ENCODE measurements at regions of chrX and their contacts with region 1.

Region 1: GRCh38 chrX:155216179-155216939 is at the start of gene VBP1:
- DNase-seq: peak; percentile 83
- H3K4me3 Mint-ChIP-seq: peak within 1 kb of the TSS; percentile 98
- H3K27ac Mint-ChIP-seq: peak within 1 kb of the TSS; percentile 92
- H3K4me1 Mint-ChIP-seq: peaks cover 19% of the 10 kb centered on the region
- H3K27me3 Mint-ChIP-seq: no peaks in the 10 kb centered on the region
- total RNA-seq, gene VBP1: 73.7 and 76.3 TPM in 2 replicates

Region 2: DNA sequence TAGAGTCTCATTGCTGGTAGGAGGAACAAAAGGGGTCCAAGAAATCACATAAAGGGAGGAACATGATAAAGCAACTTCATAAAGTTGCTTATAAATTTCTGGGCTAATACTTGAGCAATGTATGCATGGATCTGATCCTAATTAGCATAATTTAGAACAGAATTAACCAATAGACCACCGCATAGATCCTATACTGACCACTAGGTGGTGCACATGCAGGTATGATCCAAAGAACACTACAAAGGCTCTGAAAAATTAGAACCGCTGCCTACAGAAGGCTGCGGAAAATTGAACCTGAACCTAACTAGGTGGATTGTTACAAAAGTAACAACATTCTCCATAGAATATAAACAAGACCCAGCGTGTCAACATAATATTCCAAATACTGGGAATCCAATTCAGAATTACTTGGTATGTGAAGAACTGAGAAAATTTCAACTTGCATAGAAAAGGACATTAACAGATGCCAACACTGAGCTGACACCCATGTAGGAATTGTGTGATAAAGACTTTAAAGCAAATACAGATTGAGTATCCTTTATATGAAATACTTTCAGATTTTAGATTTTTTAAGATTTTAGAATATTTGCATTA is 121.8 kb before region 1 on chrX:
- intact Hi-C with region 1: loop called (anchors 5 kb)
- DNase-seq: no peak
- H3K4me3 Mint-ChIP-seq: no peak overlapping the region
- H3K27ac Mint-ChIP-seq: no peak overlapping the region
- H3K4me1 Mint-ChIP-seq: no peaks in the 10 kb centered on the region
- H3K27me3 Mint-ChIP-seq: no peaks in the 10 kb centered on the region

Region 3: GRCh38 chrX:155263854-155264628 is 47.7 kb after region 1 on chrX and contains the start of gene RAB39B:
- intact Hi-C with region 1: loop called (anchors 2 kb)
- DNase-seq: peak; percentile 60
- H3K4me3 Mint-ChIP-seq: peak within 1 kb of the TSS; percentile 88
- H3K27ac Mint-ChIP-seq: peak within 1 kb of the TSS; percentile 54
- H3K4me1 Mint-ChIP-seq: peaks cover 13% of the 10 kb centered on the region
- H3K27me3 Mint-ChIP-seq: no peaks in the 10 kb centered on the region
- total RNA-seq, gene RAB39B: 8.3 and 9.4 TPM in 2 replicates

Region 4: DNA sequence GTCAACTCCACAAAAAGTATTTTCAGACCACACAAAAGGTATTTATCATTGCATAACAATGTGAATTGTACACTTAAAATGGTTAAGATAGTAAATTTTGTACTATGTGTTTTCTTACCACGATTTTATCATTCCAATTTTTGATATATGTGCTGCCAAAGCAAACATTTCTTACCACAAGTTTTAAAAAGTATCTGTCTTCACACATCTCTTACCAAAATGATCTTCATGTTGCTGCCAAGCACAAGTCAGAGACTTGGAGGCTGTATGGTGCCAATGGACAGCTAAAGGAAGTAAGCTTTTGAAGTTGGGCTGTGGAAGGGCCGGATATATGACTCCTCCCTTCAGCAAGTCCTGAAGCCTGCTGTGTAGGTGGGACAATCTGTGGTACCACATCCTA is 328.5 kb after region 1 on chrX:
- intact Hi-C with region 1: no loop called
- DNase-seq: no peak
- H3K4me3 Mint-ChIP-seq: no peak overlapping the region
- H3K27ac Mint-ChIP-seq: no peak overlapping the region
- H3K4me1 Mint-ChIP-seq: no peaks in the 10 kb centered on the region
- H3K27me3 Mint-ChIP-seq: no peaks in the 10 kb centered on the region